Caco-2 (cell line): ENCODE measurements at regions of chr4 and their contacts with region 1.

Region 1: GRCh38 chr4:71713611-71714203 is 70.2 kb downstream of the GC start:
- DNase-seq: peak in 1 of 2 experiments; percentile 21
- H3K4me3 ChIP-seq: no peak overlapping the region
- H3K4me3 Mint-ChIP-seq: no peak overlapping the region
- H3K27ac Mint-ChIP-seq: no peak overlapping the region
- H3K4me1 ChIP-seq: no peaks in the 10 kb centered on the region
- H3K4me1 Mint-ChIP-seq: no peaks in the 10 kb centered on the region
- H3K27me3 ChIP-seq: no peaks in the 10 kb centered on the region
- H3K27me3 Mint-ChIP-seq: no peaks in the 10 kb centered on the region
- CTCF ChIP-seq: peak; percentile 33 to 46

Region 2: GRCh38 chr4:70601422-70602039 is 1112.2 kb before region 1 on chr4:
- CTCF ChIA-PET with region 1: no interaction called
- POLR2A ChIA-PET with region 1: no interaction called
- intact Hi-C with region 1: loop called (anchors 1 kb)
- DNase-seq: peak; percentile 64 to 69
- H3K4me3 ChIP-seq: no peak overlapping the region
- H3K4me3 Mint-ChIP-seq: no peak overlapping the region
- H3K27ac Mint-ChIP-seq: no peak overlapping the region
- H3K4me1 ChIP-seq: peaks cover 4% of the 10 kb centered on the region; the same call in 1 of the 2 replicates
- H3K4me1 Mint-ChIP-seq: peaks cover 6% of the 10 kb centered on the region
- H3K27me3 ChIP-seq: no peaks in the 10 kb centered on the region
- H3K27me3 Mint-ChIP-seq: no peaks in the 10 kb centered on the region
- CTCF ChIP-seq: peak; percentile 64 to 73

Region 3: DNA sequence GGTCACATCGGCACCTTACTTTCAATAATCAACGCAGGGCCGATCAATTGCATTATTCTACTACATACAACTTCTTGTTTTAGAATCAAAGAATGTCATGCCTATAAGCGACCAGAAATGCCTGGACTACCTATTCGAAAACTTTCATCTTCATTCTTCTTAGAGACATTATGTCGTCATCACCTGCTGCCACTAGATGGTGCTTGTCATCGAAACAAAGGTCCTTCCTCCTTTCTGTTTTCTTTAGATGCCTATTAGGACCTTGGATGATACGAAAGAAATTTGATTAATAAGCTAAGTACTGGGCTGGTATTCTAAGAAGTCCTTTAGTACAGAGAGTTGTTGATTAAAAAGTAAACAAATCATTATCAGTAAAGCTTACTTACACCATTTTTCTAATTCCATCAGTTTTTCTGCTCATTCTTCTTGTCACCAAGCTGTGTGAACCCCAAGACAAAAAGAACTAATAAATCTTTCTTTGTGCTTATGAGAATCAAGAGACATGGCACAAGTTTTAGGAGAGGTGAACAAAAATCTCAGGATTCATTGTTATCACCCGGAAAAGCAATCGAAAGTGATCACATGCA is 529.4 kb before region 1 on chr4:
- CTCF ChIA-PET with region 1: no interaction called
- POLR2A ChIA-PET with region 1: no interaction called
- intact Hi-C with region 1: loop called (anchors 1 kb)
- DNase-seq: peak; percentile 35 to 39
- H3K4me3 ChIP-seq: no peak overlapping the region
- H3K4me3 Mint-ChIP-seq: no peak overlapping the region
- H3K27ac Mint-ChIP-seq: no peak overlapping the region
- H3K4me1 ChIP-seq: peaks cover 3% of the 10 kb centered on the region; the same call in 1 of the 2 replicates
- H3K4me1 Mint-ChIP-seq: peaks cover 7% of the 10 kb centered on the region
- H3K27me3 ChIP-seq: peaks cover 3% of the 10 kb centered on the region; the same call in 1 of the 2 replicates
- H3K27me3 Mint-ChIP-seq: peaks cover 23% of the 10 kb centered on the region
- CTCF ChIP-seq: peak; percentile 60 to 68

Region 4: DNA sequence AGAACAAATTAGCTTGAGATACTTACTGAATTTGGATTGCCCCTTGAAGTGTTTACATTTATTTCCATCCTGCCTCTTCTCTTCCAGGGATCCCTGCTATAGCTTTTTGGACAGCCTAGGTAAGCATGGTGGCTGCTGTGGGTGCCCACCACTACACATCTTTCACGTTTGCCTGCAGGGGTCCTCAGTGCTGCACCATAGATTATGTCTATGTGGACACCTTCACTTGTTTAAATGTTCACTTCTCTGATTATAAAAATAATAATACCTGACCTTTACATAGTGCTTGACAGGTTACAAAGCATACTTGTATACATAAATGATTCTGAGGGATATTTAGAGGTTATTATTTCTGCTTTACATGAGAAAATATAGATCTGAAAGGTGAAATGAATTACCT is 442.8 kb before region 1 on chr4:
- CTCF ChIA-PET with region 1: no interaction called
- POLR2A ChIA-PET with region 1: no interaction called
- intact Hi-C with region 1: loop called (anchors 1 kb)
- DNase-seq: peak; percentile 52
- H3K4me3 ChIP-seq: no peak overlapping the region
- H3K4me3 Mint-ChIP-seq: no peak overlapping the region
- H3K27ac Mint-ChIP-seq: no peak overlapping the region
- H3K4me1 ChIP-seq: no peaks in the 10 kb centered on the region
- H3K4me1 Mint-ChIP-seq: no peaks in the 10 kb centered on the region
- H3K27me3 ChIP-seq: no peaks in the 10 kb centered on the region
- H3K27me3 Mint-ChIP-seq: no peaks in the 10 kb centered on the region
- CTCF ChIP-seq: peak; percentile 47 to 52

Region 5: GRCh38 chr4:71553605-71554004 is 160.1 kb before region 1 on chr4:
- CTCF ChIA-PET with region 1: no interaction called
- POLR2A ChIA-PET with region 1: no interaction called
- intact Hi-C with region 1: loop called (anchors 5 kb)
- DNase-seq: peak in 1 of 2 experiments; percentile 13
- H3K4me3 ChIP-seq: no peak overlapping the region
- H3K4me3 Mint-ChIP-seq: no peak overlapping the region
- H3K27ac Mint-ChIP-seq: no peak overlapping the region
- H3K4me1 ChIP-seq: peaks cover 30% of the 10 kb centered on the region
- H3K4me1 Mint-ChIP-seq: peaks cover 13% of the 10 kb centered on the region
- H3K27me3 ChIP-seq: no peaks in the 10 kb centered on the region
- H3K27me3 Mint-ChIP-seq: no peaks in the 10 kb centered on the region
- CTCF ChIP-seq: peak; percentile 46 to 47